ENCODE measurements at regions of chr14 and their contacts with region 1.

Region 1: DNA sequence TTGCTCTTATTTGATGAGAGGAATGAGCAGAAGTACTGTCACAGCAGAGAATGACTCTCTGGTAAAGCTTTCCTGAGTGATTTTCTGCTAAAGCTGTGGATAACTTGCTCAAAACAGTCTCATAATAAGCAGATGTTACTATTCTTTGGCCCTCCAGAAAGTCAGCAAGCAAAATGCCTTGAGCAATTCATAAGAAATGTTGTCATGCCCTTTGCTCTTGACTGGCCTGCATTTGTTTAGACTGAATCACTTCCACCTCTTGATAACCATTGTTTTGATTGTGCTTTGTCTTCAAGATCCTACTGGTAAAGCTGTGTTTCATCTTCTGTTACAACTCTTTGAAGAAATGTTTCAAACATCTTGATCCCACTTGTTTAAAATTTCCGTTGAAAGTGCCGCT is 457.9 kb upstream of the FOXG1 start:
- DNase-seq: no peak
- H3K4me3 ChIP-seq: no peak overlapping the region
- H3K27ac ChIP-seq: no peak overlapping the region
- H3K4me1 ChIP-seq: no peaks in the 10 kb centered on the region
- H3K27me3 ChIP-seq: no peaks in the 10 kb centered on the region
- CTCF ChIP-seq: no peak
- EP300 ChIP-seq: no peak
- POLR2A ChIP-seq: no peak

Region 2: DNA sequence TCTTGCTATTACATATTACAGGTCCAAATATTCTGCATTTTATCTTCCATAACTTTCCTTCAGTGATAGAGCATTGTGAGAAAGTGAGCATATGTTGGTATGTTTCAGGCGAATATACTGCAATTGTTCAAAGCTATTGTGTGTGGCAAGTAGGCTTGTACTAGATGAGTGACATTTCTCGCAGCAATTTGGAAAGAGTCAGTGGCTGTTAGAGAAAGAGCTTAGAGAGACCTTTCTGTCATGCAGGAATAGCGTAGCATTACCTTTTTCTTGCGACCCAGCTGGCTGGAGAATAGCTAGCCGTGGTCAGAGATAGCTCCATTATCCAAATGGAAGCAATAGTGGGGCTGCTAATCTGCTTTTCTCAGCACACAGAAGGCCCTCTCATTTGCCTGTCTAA is 220.6 kb before region 1 on chr14:
- in situ Hi-C with region 1: no loop called
- intact Hi-C with region 1: no loop called
- DNase-seq: no peak
- H3K4me3 ChIP-seq: no peak overlapping the region
- H3K27ac ChIP-seq: no peak overlapping the region
- H3K4me1 ChIP-seq: no peaks in the 10 kb centered on the region
- H3K27me3 ChIP-seq: no peaks in the 10 kb centered on the region
- CTCF ChIP-seq: no peak
- EP300 ChIP-seq: no peak
- POLR2A ChIP-seq: no peak

Region 3: GRCh38 chr14:28294834-28295440 is 13.8 kb before region 1 on chr14:
- in situ Hi-C with region 1: no loop called
- intact Hi-C with region 1: loop called (anchors 1 kb)
- DNase-seq: no peak
- H3K4me3 ChIP-seq: no peak overlapping the region
- H3K27ac ChIP-seq: no peak overlapping the region
- H3K4me1 ChIP-seq: no peaks in the 10 kb centered on the region
- H3K27me3 ChIP-seq: no peaks in the 10 kb centered on the region
- CTCF ChIP-seq: peak in 1 of 5 experiments; percentile 13
- EP300 ChIP-seq: no peak
- POLR2A ChIP-seq: no peak